HepG2 (cell line): ENCODE measurements at regions of chr13 and their contacts with region 1.

Region 1: DNA sequence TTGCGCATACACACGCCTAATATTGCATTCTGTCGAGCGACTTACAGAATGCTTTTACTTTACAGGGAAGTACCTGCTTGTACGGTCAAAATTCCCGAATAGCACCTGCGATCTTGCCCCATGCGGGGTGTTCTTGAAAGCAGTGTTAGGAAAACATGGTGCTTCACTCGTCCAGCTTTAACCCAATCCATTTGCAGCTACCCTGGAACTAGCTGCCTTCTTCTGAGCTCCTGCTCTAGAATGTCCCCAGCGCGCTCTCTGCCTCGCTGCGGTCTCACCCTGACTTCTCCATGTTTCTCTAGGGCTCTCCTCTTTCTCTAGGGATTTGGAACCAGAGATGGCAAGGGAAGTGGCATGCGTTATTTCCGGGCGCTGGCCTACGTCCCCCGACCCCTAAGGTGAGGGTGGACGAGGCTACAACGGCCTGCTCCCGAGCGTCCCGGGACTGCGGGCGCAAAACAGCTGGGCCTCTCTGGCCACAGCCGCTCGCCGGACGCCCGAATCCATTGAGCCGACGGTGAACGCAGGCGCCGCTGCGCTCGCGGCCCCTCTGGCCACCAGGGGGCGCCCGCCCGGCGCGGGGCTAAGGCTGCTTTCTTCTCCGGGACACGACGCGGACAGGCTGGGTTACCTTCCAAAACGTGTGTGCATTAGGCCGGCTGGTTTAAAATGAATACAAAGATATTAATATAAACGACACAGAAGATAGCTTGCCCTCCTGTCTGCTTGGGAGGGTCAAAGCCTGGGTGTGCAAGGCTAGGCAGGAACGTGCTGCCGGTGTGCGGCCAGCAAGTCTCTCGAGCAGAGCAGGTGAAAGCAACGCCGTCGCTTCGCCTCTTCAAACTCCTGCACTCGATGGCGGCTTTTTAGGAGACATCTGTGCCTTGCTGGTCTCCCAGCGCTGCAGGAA is 1.8 kb upstream of the SPRY2 start:
- DNase-seq: peak; percentile 55
- ATAC-seq: peak; percentile 61
- H3K4me3 ChIP-seq: peak overlapping the region; percentile 69 to 97 (median 77)
- H3K27ac ChIP-seq: peak overlapping the region; percentile 80
- H3K4me1 ChIP-seq: peaks cover 35% of the 10 kb centered on the region
- H3K27me3 ChIP-seq: no peaks in the 10 kb centered on the region; a peak in 1 of 5 replicates
- CTCF ChIP-seq: peak; percentile 89
- EP300 ChIP-seq: no peak
- POLR2A ChIP-seq: peak in 1 of 2 experiments; percentile 56; a peak in 2 of 4 replicates
- RAD21 ChIP-seq: peak; percentile 81

Region 2: DNA sequence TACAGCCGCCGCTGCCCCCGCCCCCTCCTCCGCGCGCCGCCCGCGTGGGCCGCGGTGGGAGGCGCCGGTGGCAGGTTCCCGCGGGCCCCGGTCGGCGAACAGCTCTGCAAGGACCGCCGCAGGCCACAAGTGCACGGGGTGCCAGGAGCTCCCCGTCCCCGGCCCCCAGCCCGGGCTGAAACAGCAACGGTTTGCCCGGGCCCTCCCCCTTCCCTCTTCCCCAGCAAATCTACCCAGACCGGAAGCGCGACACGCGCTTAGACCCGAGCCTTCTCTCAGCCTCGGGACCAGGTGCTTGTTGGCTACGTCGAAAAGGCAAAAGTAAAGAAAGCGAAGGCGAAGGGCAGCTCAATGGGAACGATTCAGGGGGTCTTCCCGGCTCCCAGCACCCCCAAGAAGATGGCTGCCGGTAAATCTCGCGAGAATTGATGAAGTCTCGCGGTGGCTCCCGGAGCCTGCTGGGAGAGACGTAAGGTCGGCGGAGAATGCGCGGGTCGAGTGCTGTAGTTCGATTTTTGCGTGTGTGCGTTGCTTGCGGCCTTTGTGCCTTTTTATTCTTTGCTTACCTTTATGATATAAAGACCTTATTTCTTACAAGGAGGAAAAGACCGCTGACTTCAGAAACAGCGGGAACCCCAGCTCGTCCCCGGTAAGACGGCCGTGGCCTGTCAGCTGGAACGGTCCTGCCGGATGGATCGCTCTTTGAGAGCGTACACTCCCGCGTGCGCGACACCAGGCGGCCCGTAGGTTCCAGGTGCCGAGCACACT is 936.7 kb before region 1 on chr13 and contains the start of gene RBM26:
- CTCF ChIA-PET with region 1: no interaction called
- POLR2A ChIA-PET with region 1: no interaction called
- in situ Hi-C with region 1: loop called (anchors 25 kb)
- intact Hi-C with region 1: loop called (anchors 5 kb)
- DNase-seq: peak; percentile 91
- ATAC-seq: peak; percentile 91
- H3K4me3 ChIP-seq: peak within 1 kb of the TSS; percentile 86 to 94 (median 92)
- H3K27ac ChIP-seq: peak within 1 kb of the TSS; percentile 98
- H3K4me1 ChIP-seq: peaks cover 47% of the 10 kb centered on the region
- H3K27me3 ChIP-seq: no peaks in the 10 kb centered on the region; a peak in 1 of 5 replicates
- CTCF ChIP-seq: 0 out of 2 replicates have a peak, but pooled peaks have one; percentile 18
- EP300 ChIP-seq: no peak
- POLR2A ChIP-seq: peak; percentile 87 to 94
- RAD21 ChIP-seq: no peak; the same call in 1 of the 2 replicates
- total RNA-seq, gene RBM26: 28.6 and 34.4 TPM in 2 replicates

Region 3: GRCh38 chr13:79491715-79492114 is 851.0 kb before region 1 on chr13:
- CTCF ChIA-PET with region 1: no interaction called
- POLR2A ChIA-PET with region 1: no interaction called
- in situ Hi-C with region 1: no loop called
- intact Hi-C with region 1: loop called (anchors 10 kb)
- DNase-seq: no peak
- ATAC-seq: no peak
- H3K4me3 ChIP-seq: no peak overlapping the region
- H3K27ac ChIP-seq: no peak overlapping the region
- H3K4me1 ChIP-seq: peaks cover 9% of the 10 kb centered on the region
- H3K27me3 ChIP-seq: no peaks in the 10 kb centered on the region
- CTCF ChIP-seq: no peak
- EP300 ChIP-seq: no peak
- POLR2A ChIP-seq: no peak
- RAD21 ChIP-seq: no peak

Region 4: GRCh38 chr13:79679334-79679733 is 663.4 kb before region 1 on chr13:
- CTCF ChIA-PET with region 1: no interaction called
- POLR2A ChIA-PET with region 1: no interaction called
- in situ Hi-C with region 1: no loop called
- intact Hi-C with region 1: loop called (anchors 5 kb)
- DNase-seq: peak; percentile 53
- ATAC-seq: peak; percentile 91
- H3K4me3 ChIP-seq: no peak overlapping the region
- H3K27ac ChIP-seq: no peak overlapping the region
- H3K4me1 ChIP-seq: no peaks in the 10 kb centered on the region
- H3K27me3 ChIP-seq: no peaks in the 10 kb centered on the region
- CTCF ChIP-seq: peak; percentile 79
- EP300 ChIP-seq: no peak
- POLR2A ChIP-seq: no peak
- RAD21 ChIP-seq: no peak

Region 5: DNA sequence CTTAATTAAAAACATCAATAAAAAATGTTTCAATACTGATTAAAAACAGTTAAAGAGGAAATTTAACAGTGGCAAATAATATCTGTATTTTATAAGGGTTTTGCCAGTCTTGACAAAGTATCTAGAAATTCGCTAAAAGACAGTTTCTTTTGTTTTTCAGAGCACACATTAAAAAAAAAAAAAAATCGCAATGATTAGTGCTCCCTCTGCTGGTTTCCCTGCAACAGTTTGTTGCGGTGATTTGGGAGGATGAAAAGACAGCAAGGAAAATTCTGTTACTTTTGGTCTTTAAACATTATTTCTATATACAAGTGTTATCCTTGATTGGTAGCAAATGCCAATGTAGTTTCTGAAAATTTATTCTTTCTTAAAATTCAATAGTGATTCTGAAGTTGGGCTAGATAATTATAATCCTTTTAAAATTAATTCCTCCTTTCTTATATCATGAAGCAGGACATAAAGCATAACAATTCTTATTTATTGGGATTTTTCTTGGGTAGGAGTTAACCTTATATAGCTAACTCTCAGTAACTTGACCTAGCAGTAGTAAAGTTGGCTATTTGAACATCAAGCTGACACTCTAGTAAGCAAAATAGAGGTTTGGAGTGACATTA is 21.3 kb after region 1 on chr13:
- CTCF ChIA-PET with region 1: interaction called, 28 read pairs
- POLR2A ChIA-PET with region 1: interaction called, 6 read pairs
- in situ Hi-C with region 1: no loop called
- intact Hi-C with region 1: loop called (anchors 1 kb)
- DNase-seq: peak; percentile 18
- ATAC-seq: no peak
- H3K4me3 ChIP-seq: peak overlapping the region in 1 of 3 experiments; percentile 54; a peak in 2 of 6 replicates
- H3K27ac ChIP-seq: no peak overlapping the region
- H3K4me1 ChIP-seq: peaks cover 47% of the 10 kb centered on the region
- H3K27me3 ChIP-seq: no peaks in the 10 kb centered on the region
- CTCF ChIP-seq: peak; percentile 64
- EP300 ChIP-seq: no peak
- POLR2A ChIP-seq: no peak
- RAD21 ChIP-seq: no peak

Region 6: DNA sequence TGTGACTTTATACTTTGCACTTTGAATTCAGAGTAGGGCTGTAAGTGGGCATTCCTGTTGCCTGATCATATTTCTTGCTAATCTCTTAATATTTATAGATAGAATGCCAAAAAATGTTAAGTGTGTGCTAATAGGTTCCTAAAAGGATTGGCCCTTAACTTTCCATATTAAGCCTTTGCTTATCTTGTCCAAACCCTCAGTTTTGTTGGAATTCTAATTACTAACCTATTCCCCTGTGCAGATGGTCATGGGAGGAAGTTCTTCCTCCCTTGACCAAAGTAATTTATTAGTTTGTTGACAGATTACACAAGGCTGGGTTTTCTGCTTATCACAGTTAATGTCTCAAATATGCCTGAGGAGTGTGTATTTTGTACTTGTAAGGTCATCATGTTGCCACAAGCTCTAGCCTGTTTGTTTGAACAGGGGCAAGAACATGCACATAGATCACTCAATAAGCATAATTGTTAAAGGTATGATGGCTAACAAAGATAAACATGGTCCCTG is 539.3 kb after region 1 on chr13:
- CTCF ChIA-PET with region 1: no interaction called
- POLR2A ChIA-PET with region 1: no interaction called
- in situ Hi-C with region 1: no loop called
- intact Hi-C with region 1: no loop called
- DNase-seq: no peak
- ATAC-seq: no peak
- H3K4me3 ChIP-seq: no peak overlapping the region
- H3K27ac ChIP-seq: no peak overlapping the region
- H3K4me1 ChIP-seq: no peaks in the 10 kb centered on the region
- H3K27me3 ChIP-seq: no peaks in the 10 kb centered on the region
- CTCF ChIP-seq: no peak
- EP300 ChIP-seq: no peak
- POLR2A ChIP-seq: no peak
- RAD21 ChIP-seq: no peak